ENCODE measurements at regions of chr9 and their contacts with region 1.

Region 1: GRCh38 chr9:136283291-136284235 is 20.3 kb downstream of the CCDC187 start:
- DNase-seq: peak; percentile 59 to 92 (median 82)

Region 2: GRCh38 chr9:136170006-136170901 is 113.3 kb before region 1 on chr9:
- intact Hi-C with region 1: loop called (anchors 10 kb)
- DNase-seq: peak in 38 of 42 donors; percentile 9 to 73 (median 48)

Region 3: DNA sequence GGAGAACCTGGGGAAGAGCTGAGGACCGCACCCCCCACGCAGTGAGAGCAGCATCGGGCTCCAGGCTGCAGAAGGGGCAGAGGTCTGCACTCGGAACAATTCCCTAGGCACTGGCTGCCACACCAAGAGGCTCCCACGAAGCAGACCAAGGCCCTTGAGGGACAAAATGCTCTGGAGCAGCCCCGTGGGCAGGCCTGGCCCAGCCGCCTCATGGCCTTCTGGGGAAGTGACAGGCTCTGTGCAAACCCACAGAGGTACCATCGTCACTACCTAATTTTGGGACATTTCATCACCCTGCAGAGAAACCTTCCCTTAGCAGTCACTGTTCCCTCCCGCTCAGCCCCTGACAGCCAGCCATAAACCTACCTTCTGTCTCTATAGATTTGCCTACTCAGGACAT is 645.0 kb after region 1 on chr9:
- intact Hi-C with region 1: no loop called
- DNase-seq: no peak